ENCODE measurements at regions of chr9 and their contacts with region 1.

Region 1: GRCh38 chr9:33415501-33416038 is 13.2 kb upstream of the AQP7 start:
- DNase-seq: peak; percentile 65 to 87 (median 73)
- ATAC-seq: peak; percentile 44 to 87 (median 78)
- H3K4me3 ChIP-seq: no peak overlapping the region
- H3K27ac ChIP-seq: peak overlapping the region in 1 of 12 donors; percentile 40
- H3K4me1 ChIP-seq: peaks cover 0 to 15% (median 5%) of the 10 kb centered on the region in 12 donors
- H3K27me3 ChIP-seq: no peaks in the 10 kb centered on the region
- CTCF ChIP-seq: peak; percentile 64 to 84 (median 76)
- POLR2A ChIP-seq: no peak

Region 2: GRCh38 chr9:33350310-33350709 is 65.3 kb before region 1 on chr9:
- intact Hi-C with region 1: loop called in 1 of 10 experiments (anchors 10 kb)
- DNase-seq: no peak
- ATAC-seq: peak in 3 of 4 donors; percentile 52 to 75 (median 71)
- H3K4me3 ChIP-seq: no peak overlapping the region
- H3K27ac ChIP-seq: peak overlapping the region in 7 of 12 donors; percentile 1 to 76 (median 41)
- H3K4me1 ChIP-seq: peaks cover 0 to 28% (median 11%) of the 10 kb centered on the region in 12 donors
- H3K27me3 ChIP-seq: no peaks in the 10 kb centered on the region
- CTCF ChIP-seq: no peak
- POLR2A ChIP-seq: no peak

Region 3: DNA sequence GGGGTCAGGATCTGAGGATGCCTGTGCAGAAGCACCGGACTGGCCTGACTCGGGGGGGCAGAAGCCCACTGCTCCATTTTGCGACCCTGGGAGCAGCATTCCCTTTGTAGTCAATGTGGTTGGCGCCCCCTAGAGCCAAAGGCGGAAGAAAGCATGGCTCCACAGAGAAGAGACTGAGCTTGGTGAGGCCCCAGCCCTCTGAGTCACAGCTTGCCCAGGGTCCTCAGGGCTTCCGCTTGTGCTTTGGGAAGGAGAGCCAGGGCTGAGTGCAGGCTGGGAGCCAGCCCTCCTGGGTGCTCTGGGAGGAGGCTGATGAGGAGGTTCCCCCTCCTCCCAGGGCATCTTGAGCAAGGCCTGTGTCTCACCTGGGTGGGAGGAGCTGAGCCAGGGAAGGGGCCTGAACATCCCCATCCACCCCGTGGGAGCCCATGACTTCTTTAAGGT is 37.3 kb after region 1 on chr9:
- intact Hi-C with region 1: loop called in 1 of 10 experiments (anchors 5 kb)
- DNase-seq: peak in 4 of 5 donors; percentile 37 to 72 (median 54)
- ATAC-seq: peak in 3 of 4 donors; percentile 62 to 69 (median 63)
- H3K4me3 ChIP-seq: no peak overlapping the region
- H3K27ac ChIP-seq: no peak overlapping the region
- H3K4me1 ChIP-seq: peaks cover 0 to 10% (median under 1%) of the 10 kb centered on the region in 12 donors
- H3K27me3 ChIP-seq: no peaks in the 10 kb centered on the region
- CTCF ChIP-seq: peak; percentile 38 to 65 (median 58)
- POLR2A ChIP-seq: no peak

Region 4: GRCh38 chr9:33466565-33467495 is 51.3 kb after region 1 on chr9:
- intact Hi-C with region 1: loop called in 2 of 10 experiments (anchors 5 to 10 kb)
- DNase-seq: peak; percentile 50 to 84 (median 57)
- ATAC-seq: peak; percentile 28 to 68 (median 46)
- H3K4me3 ChIP-seq: no peak overlapping the region
- H3K27ac ChIP-seq: no peak overlapping the region
- H3K4me1 ChIP-seq: peaks cover 0 to 6% (median 0%) of the 10 kb centered on the region in 12 donors
- H3K27me3 ChIP-seq: no peaks in the 10 kb centered on the region
- CTCF ChIP-seq: peak; percentile 84 to 95 (median 89)
- POLR2A ChIP-seq: no peak

Region 5: DNA sequence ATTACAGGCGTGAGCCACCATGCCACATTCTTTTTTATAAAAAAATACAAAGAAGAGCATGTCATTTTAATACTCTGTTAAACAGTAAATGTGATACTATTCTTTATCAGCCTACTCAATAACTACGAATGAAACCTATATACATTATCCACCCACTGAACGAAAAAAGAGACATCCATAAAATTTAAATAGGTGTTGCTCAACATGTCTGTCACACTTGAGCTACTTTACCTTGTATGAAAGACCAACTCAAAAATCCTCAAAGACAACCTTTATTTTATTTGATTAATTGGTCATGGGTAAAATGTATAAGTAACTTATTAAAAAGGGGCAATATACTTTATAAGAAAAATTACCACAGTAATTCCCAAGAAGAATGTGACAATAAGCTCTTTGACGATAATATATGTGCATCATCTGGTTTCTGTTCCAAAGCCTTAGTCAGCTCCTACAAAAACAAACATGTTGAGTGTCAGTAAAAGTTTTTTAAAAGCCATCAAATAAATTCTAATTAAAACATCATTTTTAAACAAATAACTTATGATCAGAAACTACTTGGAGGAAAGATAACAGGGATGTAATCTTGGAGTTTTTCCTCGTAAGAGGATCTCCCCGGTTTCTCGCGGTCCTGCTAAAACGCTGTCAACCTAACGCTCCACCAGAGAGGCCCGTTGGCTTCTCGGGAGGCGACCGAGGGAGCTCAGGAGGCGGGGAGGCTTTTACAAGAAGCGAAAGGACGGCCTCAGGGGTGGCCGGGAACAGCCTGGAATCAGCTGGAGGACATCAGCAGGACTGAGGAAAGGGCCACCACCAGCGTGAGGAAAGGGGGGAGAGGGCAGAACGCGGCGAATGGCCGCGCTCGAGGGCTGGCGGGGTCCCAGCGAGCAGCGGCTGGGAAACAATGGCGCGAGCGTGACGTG is 95.0 kb after region 1 on chr9:
- intact Hi-C with region 1: no loop called
- DNase-seq: peak; percentile 69 to 85 (median 77)
- ATAC-seq: peak; percentile 85 to 97 (median 92)
- H3K4me3 ChIP-seq: peak overlapping the region; percentile 12 to 74 (median 61)
- H3K27ac ChIP-seq: peak overlapping the region in 11 of 12 donors; percentile 69 to 92 (median 81)
- H3K4me1 ChIP-seq: peaks cover 0 to 13% (median 7%) of the 10 kb centered on the region in 12 donors
- H3K27me3 ChIP-seq: no peaks in the 10 kb centered on the region
- CTCF ChIP-seq: no peak
- POLR2A ChIP-seq: peak in 1 of 2 donors; percentile 32